Activated CD8-positive, alpha-beta memory T cell treated with anti-CD3 and anti-CD28 coated beads, Interleukin-2, amount 10 ng/mL, durations not matched to agents 7 days and 5 days (primary cell): ENCODE measurements at regions of chr12 and their contacts with region 1.

Region 1: DNA sequence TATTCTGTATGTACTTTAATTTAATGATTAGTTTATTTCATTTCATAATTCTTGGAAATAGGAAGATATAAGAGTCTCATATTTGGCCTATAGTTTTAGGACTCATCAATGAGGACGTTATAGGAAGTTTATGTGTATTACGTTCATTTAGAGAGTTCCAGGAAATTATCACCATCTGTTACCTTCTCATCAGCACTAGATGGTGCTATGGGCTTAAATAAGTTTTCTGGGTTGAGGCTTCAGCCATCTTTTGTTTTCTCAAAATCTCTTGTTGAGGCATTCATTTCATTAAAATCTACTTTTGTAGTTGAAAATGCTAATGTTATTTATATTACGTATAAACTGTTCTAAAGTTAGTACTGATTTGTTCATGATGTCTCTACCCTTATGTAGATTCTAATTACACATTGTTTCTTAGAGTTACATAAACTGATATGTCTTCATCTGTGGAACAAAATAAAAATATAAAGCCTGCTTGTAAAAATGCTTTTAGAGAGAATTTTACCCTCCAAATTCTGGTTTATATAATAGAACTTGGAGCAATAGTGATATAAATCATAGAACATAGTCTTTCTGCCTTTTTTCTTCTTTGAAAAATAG is 89.2 kb downstream of the CFAP54 start:
- DNase-seq: no peak
- ATAC-seq: peak; percentile 87
- H3K4me3 Mint-ChIP-seq: no peak overlapping the region
- H3K27ac Mint-ChIP-seq: no peak overlapping the region
- H3K4me1 Mint-ChIP-seq: peaks cover 4% of the 10 kb centered on the region
- H3K27me3 Mint-ChIP-seq: peaks cover 7% of the 10 kb centered on the region

Region 2: DNA sequence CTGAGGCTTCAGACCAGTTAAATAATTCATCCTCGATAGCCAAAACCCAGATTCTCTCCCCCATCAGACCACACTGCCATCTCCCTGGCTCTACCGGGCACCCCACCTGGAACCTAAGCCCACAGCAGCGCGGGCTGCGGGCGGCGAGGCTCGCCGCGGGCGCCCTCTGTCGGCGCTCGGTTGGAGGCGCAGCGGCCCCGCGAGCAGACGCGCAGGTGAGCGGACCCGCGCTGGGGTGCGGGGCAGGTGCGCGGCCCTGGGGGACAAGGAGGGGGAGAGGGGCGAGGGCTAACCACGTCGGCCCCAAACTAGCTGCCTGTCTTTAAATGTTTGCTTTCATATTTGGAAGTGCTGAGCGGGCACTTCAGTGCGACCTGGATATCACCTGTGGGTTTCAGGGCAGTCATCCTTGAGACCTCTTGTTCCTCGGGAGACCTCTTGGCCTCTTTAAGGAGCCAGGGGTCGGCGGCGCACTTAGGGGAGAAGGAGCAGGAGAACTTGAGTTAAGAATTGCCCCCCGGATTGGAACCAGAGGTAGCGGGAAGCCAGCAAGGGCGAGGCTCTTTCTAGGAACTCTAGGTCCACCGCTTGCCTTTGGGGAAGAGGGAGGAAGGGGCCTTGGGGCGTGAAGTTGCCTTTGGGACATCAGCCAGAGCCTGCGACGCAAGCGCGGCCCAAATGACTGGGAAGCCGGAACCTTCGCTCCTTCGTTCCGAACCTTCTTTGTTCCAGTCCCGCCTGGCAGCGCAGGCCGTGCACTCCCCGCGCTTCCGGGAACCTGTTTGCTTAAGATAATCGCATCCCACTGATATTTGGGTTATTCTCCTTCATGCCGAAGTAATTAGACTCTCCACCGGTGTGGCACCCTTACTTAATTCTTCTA is 407.1 kb after region 1 on chr12:
- CTCF ChIA-PET with region 1: interaction called, 10 read pairs
- DNase-seq: peak; percentile 44
- ATAC-seq: peak; percentile 93
- H3K4me3 Mint-ChIP-seq: peak overlapping the region; percentile 39
- H3K27ac Mint-ChIP-seq: no peak overlapping the region
- H3K4me1 Mint-ChIP-seq: peaks cover 5% of the 10 kb centered on the region
- H3K27me3 Mint-ChIP-seq: peaks cover 49% of the 10 kb centered on the region